H1 (cell line): ENCODE measurements at regions of chr4 and their contacts with region 1.

Region 1: DNA sequence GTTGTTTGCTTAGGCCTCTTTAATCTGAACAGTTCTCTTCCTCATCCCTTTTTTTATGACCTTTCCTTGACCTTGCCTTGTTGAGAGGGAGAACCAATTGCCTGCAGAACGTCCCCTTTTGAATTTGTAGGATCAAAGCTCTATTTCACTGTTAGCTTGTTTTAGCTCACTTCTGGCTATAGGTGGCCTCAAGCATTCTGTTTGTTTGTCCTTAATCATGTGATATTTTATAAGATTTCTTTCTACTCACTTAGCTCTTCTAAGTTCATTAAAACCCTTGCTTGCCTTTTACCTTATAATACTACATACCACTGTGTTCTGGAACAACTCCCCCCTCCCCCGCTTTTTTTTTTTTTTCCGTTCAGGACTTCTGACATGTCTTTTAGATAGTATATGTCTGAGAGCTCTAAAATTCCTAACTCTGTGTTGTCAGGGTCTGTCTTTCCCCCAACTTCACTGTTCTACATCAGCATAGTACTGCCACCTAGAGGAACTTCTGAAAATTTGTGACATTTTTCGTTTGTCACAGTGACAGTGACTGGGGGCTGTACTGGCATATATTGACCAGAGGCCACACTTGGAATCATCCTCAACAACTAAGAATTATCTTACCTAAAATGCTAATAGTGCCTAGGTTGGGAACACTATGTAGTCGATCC is 128.5 kb downstream of the LARP7 start:
- DNase-seq: peak in 1 of 2 experiments; percentile 9
- H3K4me3 ChIP-seq: peak overlapping the region in 1 of 4 experiments; percentile 42; a peak in 2 of 8 replicates
- H3K27ac ChIP-seq: no peak overlapping the region
- H3K4me1 ChIP-seq: peaks cover 0 to 5% (median 3%) of the 10 kb centered on the region in 4 experiments; a peak in 3 of 7 replicates
- H3K27me3 ChIP-seq: no peaks in the 10 kb centered on the region
- CTCF ChIP-seq: peak in 2 of 3 experiments; percentile 68 to 79; a peak in 3 of 4 replicates
- EP300 ChIP-seq: no peak
- POLR2A ChIP-seq: no peak
- RAD21 ChIP-seq: peak; percentile 79 to 85

Region 2: GRCh38 chr4:112485888-112486287 is 279.6 kb before region 1 on chr4:
- CTCF ChIA-PET with region 1: no interaction called
- POLR2A ChIA-PET with region 1: no interaction called
- DNase-seq: no peak
- H3K4me3 ChIP-seq: no peak overlapping the region
- H3K27ac ChIP-seq: no peak overlapping the region
- H3K4me1 ChIP-seq: no peaks in the 10 kb centered on the region
- H3K27me3 ChIP-seq: no peaks in the 10 kb centered on the region
- CTCF ChIP-seq: no peak
- EP300 ChIP-seq: no peak
- POLR2A ChIP-seq: no peak
- RAD21 ChIP-seq: no peak

Region 3: GRCh38 chr4:112616984-112617383 is 148.5 kb before region 1 on chr4:
- CTCF ChIA-PET with region 1: interaction called, 13 read pairs
- POLR2A ChIA-PET with region 1: no interaction called
- DNase-seq: no peak
- H3K4me3 ChIP-seq: no peak overlapping the region
- H3K27ac ChIP-seq: no peak overlapping the region
- H3K4me1 ChIP-seq: no peaks in the 10 kb centered on the region
- H3K27me3 ChIP-seq: no peaks in the 10 kb centered on the region
- CTCF ChIP-seq: no peak
- EP300 ChIP-seq: no peak
- POLR2A ChIP-seq: no peak
- RAD21 ChIP-seq: no peak

Region 4: DNA sequence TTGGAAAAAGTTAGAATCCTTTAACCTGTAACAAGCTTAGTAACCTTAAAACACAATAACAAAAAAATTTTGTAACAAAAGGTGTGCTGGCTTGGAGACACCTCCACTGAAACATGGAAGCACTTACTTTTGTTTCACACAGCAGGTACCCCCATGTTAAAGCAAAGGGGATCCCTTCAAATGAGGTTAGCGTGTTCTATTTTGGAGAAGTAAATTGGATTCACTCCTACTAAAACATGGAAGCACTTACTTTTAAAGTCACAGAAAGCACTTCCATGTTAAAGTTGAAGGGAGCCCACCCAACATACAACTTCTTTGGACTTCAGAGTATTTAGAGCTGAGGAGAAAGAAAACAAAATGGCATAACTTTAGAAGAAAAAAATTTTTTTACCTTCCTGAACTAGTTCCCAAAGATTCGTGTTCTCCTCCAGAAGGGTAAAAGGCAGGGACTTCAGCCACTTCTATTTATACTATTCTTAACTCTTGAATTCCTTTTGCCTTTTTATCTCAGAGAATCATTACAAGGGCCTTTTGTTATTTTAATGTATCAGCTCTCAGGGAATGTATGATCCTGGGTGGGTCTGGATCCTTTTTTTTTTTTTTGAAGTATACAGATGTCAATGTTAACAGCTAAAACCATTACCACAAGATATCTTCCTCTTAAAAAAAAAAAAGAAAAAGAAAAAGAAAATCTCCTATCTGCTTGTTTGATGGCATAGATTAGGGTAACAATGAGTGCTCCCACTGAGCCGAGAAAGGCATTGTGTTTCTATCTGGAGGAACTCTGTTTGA is 117.0 kb before region 1 on chr4:
- CTCF ChIA-PET with region 1: interaction called, 73 read pairs
- POLR2A ChIA-PET with region 1: interaction called, 612 read pairs
- DNase-seq: peak in 1 of 2 experiments; percentile 74
- H3K4me3 ChIP-seq: peak overlapping the region; percentile 75 to 100 (median 100)
- H3K27ac ChIP-seq: peak overlapping the region; percentile 92
- H3K4me1 ChIP-seq: peaks cover 0 to 10% (median 1%) of the 10 kb centered on the region in 4 experiments; a peak in 2 of 7 replicates
- H3K27me3 ChIP-seq: no peaks in the 10 kb centered on the region
- CTCF ChIP-seq: no peak
- EP300 ChIP-seq: peak in 1 of 2 experiments; percentile 64; a peak in 1 of 3 replicates
- POLR2A ChIP-seq: peak; percentile 95 to 98
- RAD21 ChIP-seq: no peak

Region 5: GRCh38 chr4:112674376-112674775 is 91.1 kb before region 1 on chr4:
- CTCF ChIA-PET with region 1: interaction called, 10 read pairs
- POLR2A ChIA-PET with region 1: interaction called, 3 read pairs
- DNase-seq: no peak
- H3K4me3 ChIP-seq: no peak overlapping the region
- H3K27ac ChIP-seq: no peak overlapping the region
- H3K4me1 ChIP-seq: no peaks in the 10 kb centered on the region
- H3K27me3 ChIP-seq: no peaks in the 10 kb centered on the region
- CTCF ChIP-seq: no peak
- EP300 ChIP-seq: no peak
- POLR2A ChIP-seq: no peak
- RAD21 ChIP-seq: no peak

Region 6: DNA sequence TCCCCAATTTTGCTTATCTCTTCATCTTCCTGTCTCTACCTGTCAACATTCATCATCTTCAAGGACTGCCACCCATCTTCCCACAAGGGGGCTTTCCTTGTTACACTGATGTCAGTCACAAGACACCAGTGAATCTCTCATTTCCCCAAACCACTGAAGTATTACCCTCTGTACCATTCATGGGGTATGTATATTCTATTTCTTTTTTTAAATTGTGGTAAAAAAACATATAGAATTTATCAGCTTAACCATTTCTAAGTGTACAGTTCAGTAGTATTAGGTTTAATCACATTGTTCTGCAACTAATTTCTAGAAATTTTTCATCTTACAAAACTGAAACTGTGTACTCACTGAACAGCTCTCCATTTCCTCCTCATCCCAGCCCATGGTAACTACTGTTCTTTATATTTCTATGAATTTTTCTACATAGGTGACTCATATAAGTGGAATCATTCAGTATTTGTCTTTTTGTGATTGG is 29.9 kb before region 1 on chr4:
- CTCF ChIA-PET with region 1: interaction called, 11 read pairs
- POLR2A ChIA-PET with region 1: interaction called, 3 read pairs
- DNase-seq: no peak
- H3K4me3 ChIP-seq: no peak overlapping the region
- H3K27ac ChIP-seq: no peak overlapping the region
- H3K4me1 ChIP-seq: peaks cover 0 to 6% (median 2%) of the 10 kb centered on the region in 4 experiments; a peak in 4 of 7 replicates
- H3K27me3 ChIP-seq: no peaks in the 10 kb centered on the region
- CTCF ChIP-seq: no peak
- EP300 ChIP-seq: no peak
- POLR2A ChIP-seq: no peak
- RAD21 ChIP-seq: peak in 1 of 2 experiments; percentile 8; a peak in 1 of 4 replicates

Region 7: GRCh38 chr4:112775801-112776200 is 10.4 kb after region 1 on chr4:
- CTCF ChIA-PET with region 1: interaction called, 42 read pairs
- POLR2A ChIA-PET with region 1: interaction called, 6 read pairs
- DNase-seq: no peak
- H3K4me3 ChIP-seq: no peak overlapping the region
- H3K27ac ChIP-seq: no peak overlapping the region
- H3K4me1 ChIP-seq: peaks cover 0 to 4% (median 2%) of the 10 kb centered on the region in 4 experiments; a peak in 3 of 7 replicates
- H3K27me3 ChIP-seq: no peaks in the 10 kb centered on the region
- CTCF ChIP-seq: no peak
- EP300 ChIP-seq: no peak
- POLR2A ChIP-seq: no peak
- RAD21 ChIP-seq: no peak

Region 8: GRCh38 chr4:112938461-112939058 is 173.1 kb after region 1 on chr4:
- CTCF ChIA-PET with region 1: interaction called, 93 read pairs
- POLR2A ChIA-PET with region 1: no interaction called
- DNase-seq: no peak
- H3K4me3 ChIP-seq: no peak overlapping the region
- H3K27ac ChIP-seq: no peak overlapping the region
- H3K4me1 ChIP-seq: peaks cover 0 to 2% (median under 1%) of the 10 kb centered on the region in 4 experiments; a peak in 1 of 7 replicates
- H3K27me3 ChIP-seq: no peaks in the 10 kb centered on the region
- CTCF ChIP-seq: peak in 2 of 3 experiments; percentile 53 to 63; a peak in 2 of 4 replicates
- EP300 ChIP-seq: no peak
- POLR2A ChIP-seq: no peak
- RAD21 ChIP-seq: peak; percentile 84 to 88